CD4-positive, alpha-beta T cell (primary cell): ENCODE measurements at regions of chr5 and their contacts with region 1.

Region 1: GRCh38 chr5:147188200-147189108 is 46.4 kb upstream of the STK32A start:
- DNase-seq: peak in 9 of 14 experiments; percentile 4 to 74 (median 26)
- ATAC-seq: peak; percentile 67
- H3K4me3 ChIP-seq: no peak overlapping the region
- H3K4me3 Mint-ChIP-seq: no peak overlapping the region
- H3K27ac ChIP-seq: no peak overlapping the region
- H3K27ac Mint-ChIP-seq: no peak overlapping the region
- H3K4me1 ChIP-seq: peaks cover 4% of the 10 kb centered on the region
- H3K4me1 Mint-ChIP-seq: peaks cover 7% of the 10 kb centered on the region
- H3K27me3 ChIP-seq: peaks cover 0 to 5% of the 10 kb centered on the region in 2 experiments
- H3K27me3 Mint-ChIP-seq: peaks cover 12% of the 10 kb centered on the region
- CTCF ChIP-seq: peak; percentile 90

Region 2: GRCh38 chr5:146533260-146533857 is 655.1 kb before region 1 on chr5:
- CTCF ChIA-PET with region 1: interaction called, 10 read pairs
- POLR2A ChIA-PET with region 1: no interaction called
- intact Hi-C with region 1: loop called (anchors 1 to 2 kb)
- DNase-seq: peak; percentile 50 to 82 (median 68)
- ATAC-seq: peak; percentile 90
- H3K4me3 ChIP-seq: no peak overlapping the region
- H3K4me3 Mint-ChIP-seq: no peak overlapping the region
- H3K27ac ChIP-seq: no peak overlapping the region
- H3K27ac Mint-ChIP-seq: no peak overlapping the region
- H3K4me1 ChIP-seq: no peaks in the 10 kb centered on the region
- H3K4me1 Mint-ChIP-seq: peaks cover 5% of the 10 kb centered on the region
- H3K27me3 ChIP-seq: no peaks in the 10 kb centered on the region
- H3K27me3 Mint-ChIP-seq: no peaks in the 10 kb centered on the region
- CTCF ChIP-seq: peak; percentile 78

Region 3: GRCh38 chr5:146541958-146542849 is 646.2 kb before region 1 on chr5:
- CTCF ChIA-PET with region 1: interaction called, 16 read pairs
- POLR2A ChIA-PET with region 1: no interaction called
- intact Hi-C with region 1: no loop called
- DNase-seq: peak; percentile 43 to 75 (median 56)
- ATAC-seq: peak; percentile 80
- H3K4me3 ChIP-seq: no peak overlapping the region
- H3K4me3 Mint-ChIP-seq: no peak overlapping the region
- H3K27ac ChIP-seq: no peak overlapping the region
- H3K27ac Mint-ChIP-seq: no peak overlapping the region
- H3K4me1 ChIP-seq: no peaks in the 10 kb centered on the region
- H3K4me1 Mint-ChIP-seq: no peaks in the 10 kb centered on the region
- H3K27me3 ChIP-seq: no peaks in the 10 kb centered on the region
- H3K27me3 Mint-ChIP-seq: no peaks in the 10 kb centered on the region
- CTCF ChIP-seq: peak; percentile 84

Region 4: DNA sequence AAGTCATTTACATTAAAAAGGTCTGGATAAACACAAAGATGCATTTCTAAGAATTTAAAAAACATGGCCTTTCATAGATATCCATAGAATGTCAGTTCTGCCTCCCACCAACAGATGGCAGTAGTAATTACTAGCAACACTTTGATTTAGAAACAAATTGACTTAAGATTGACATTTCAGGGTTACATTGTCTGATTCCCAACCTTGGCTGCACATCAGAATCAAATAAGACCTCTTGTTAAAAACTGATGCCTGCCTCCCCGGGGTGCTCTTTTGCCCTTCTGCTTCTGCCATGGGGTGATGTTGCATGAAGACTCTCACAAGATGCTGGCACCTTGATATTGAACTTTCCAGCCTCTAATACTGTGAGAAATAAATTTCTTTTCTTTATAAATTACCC is 526.2 kb before region 1 on chr5:
- CTCF ChIA-PET with region 1: interaction called, 3 read pairs
- POLR2A ChIA-PET with region 1: no interaction called
- intact Hi-C with region 1: loop called in 1 of 2 experiments (anchors 5 kb)
- DNase-seq: peak in 5 of 14 experiments; percentile 2 to 64 (median 61)
- ATAC-seq: no peak
- H3K4me3 ChIP-seq: no peak overlapping the region
- H3K4me3 Mint-ChIP-seq: no peak overlapping the region
- H3K27ac ChIP-seq: no peak overlapping the region
- H3K27ac Mint-ChIP-seq: no peak overlapping the region
- H3K4me1 ChIP-seq: no peaks in the 10 kb centered on the region
- H3K4me1 Mint-ChIP-seq: peaks cover 20% of the 10 kb centered on the region
- H3K27me3 ChIP-seq: no peaks in the 10 kb centered on the region
- H3K27me3 Mint-ChIP-seq: no peaks in the 10 kb centered on the region
- CTCF ChIP-seq: peak; percentile 79

Region 5: GRCh38 chr5:147835386-147835798 is 646.9 kb after region 1 on chr5:
- CTCF ChIA-PET with region 1: no interaction called
- POLR2A ChIA-PET with region 1: no interaction called
- intact Hi-C with region 1: no loop called
- DNase-seq: no peak
- ATAC-seq: no peak
- H3K4me3 ChIP-seq: no peak overlapping the region
- H3K4me3 Mint-ChIP-seq: no peak overlapping the region
- H3K27ac ChIP-seq: no peak overlapping the region
- H3K27ac Mint-ChIP-seq: no peak overlapping the region
- H3K4me1 ChIP-seq: no peaks in the 10 kb centered on the region
- H3K4me1 Mint-ChIP-seq: no peaks in the 10 kb centered on the region
- H3K27me3 ChIP-seq: peaks cover 0 to 3% of the 10 kb centered on the region in 2 experiments
- H3K27me3 Mint-ChIP-seq: no peaks in the 10 kb centered on the region
- CTCF ChIP-seq: no peak